ENCODE measurements at regions of chr2 and their contacts with region 1.

Region 1: DNA sequence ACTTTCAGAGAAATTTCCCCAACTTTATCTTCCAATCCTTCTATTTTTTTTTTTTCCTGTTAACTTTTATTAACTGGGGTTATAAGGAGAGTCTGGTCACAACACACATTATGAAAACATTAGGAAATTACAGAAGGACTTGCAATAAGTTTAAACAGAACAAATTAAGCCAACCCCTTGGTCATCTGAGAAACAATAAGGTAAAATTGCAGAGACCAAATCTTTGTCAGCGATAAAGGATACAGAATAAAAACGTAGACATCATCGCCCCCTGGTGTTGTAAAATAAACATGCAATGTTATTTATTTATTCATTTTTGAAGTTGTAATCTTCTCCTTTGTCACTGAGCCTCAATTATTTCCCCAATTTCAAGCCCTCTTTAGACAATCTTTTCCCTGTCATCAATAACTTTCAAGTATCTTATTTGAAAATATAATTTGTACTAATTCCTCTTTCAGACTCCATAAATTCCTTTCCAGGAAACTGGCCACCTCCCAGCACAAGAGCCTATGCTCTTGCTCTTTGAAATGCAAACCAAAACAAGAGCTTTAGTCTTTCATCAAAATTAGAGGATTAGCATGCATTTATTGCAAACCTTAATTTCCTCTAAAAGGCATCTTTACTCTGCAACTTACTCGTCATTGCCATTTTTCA is 19.5 kb downstream of the G6PC2 start:
- DNase-seq: peak; percentile 48 to 75 (median 67)
- H3K4me3 ChIP-seq: no peak overlapping the region
- H3K27ac ChIP-seq: no peak overlapping the region
- H3K4me1 ChIP-seq: no peaks in the 10 kb centered on the region
- H3K27me3 ChIP-seq: peaks cover 0 to 3% (median 0%) of the 10 kb centered on the region in 5 experiments

Region 2: DNA sequence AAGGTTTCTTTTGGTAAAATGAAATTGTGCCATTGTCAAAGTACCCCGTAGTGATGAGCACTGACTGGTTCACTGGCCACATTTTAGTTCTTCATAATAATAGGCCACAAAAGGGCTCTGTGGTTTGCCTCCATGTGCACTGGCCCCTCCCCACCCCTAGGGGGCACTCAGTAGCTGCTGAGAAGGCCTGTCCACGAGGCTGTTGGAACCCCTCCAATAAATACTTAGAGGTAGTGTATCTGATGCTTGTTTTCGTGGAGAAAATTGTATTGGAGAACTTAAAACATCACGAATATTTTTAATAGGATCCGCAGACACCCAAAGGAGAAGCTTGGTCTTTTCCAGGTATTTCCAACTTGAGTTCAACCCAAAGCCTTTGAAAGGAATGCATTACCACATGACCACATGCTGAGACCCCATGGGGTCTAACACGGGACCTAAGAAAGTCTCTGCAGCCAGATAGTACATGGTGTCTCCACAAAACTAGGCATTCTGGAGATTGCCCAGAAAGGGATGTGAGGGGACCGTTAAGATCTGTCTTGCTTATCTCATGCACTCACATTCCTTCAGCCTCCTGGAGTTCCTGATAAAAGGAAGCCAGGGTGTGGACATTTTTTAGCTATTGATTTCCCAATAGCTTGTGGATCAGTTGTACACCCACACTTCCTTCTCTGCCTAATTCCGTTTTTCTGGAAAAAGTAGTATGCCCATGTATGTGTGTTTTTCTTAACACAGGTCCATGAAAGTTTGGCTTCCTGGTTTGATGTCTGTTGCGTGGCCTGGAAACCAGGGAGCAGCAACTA is 146.7 kb before region 1 on chr2:
- CTCF ChIA-PET with region 1: interaction called, 39 read pairs
- POLR2A ChIA-PET with region 1: no interaction called
- DNase-seq: peak; percentile 66 to 84 (median 83)
- H3K4me3 ChIP-seq: no peak overlapping the region
- H3K27ac ChIP-seq: peak overlapping the region in 1 of 2 experiments; percentile 25
- H3K4me1 ChIP-seq: peaks cover 0 to 12% (median 2%) of the 10 kb centered on the region in 4 experiments
- H3K27me3 ChIP-seq: no peaks in the 10 kb centered on the region

Measured in common myeloid progenitor, CD34-positive (primary cell).